Dorsolateral prefrontal cortex (tissue), 120 donors: ENCODE measurements at regions of chr12 and their contacts with region 1.

Region 1: DNA sequence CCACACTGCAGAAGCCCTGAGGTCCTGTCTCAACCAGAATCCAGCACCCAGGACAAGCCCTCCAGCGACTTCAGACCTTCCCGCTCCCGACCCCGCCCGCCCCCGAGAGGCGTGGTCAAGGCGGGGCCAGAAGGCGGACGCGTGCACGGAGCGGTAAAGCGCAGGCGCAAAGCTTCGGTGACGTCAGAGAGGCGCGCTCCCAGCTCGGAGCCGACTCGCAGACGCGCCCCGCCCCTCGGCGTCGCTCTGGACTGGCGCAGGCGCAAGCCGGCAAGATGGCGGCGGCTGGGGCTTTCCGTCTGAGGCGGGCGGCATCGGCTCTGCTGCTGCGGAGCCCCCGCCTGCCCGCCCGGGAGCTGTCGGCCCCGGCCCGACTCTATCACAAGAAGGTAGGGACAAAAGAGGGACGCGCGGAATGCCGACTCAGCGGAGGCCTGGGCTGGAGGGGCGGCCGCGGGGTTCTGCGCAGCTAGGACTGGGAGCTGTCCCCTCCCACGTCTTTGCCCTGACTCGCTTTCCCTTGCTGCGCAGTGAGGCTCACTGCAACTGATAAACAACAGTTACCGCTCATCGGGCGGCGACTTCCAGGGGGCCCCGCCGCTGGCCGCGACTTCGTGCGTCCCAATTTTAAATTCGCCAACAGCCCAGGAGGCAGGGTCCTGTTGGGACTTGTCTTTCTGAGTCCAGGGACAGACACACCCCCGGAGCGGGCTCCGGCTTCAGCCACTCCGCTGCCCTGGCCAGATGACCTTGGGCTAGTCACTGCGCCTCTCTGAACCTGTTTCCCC is at the start of gene ISCU:
- DNase-seq: peak; percentile 91 to 99 (median 96)
- H3K4me3 ChIP-seq: peak within 1 kb of the TSS; percentile 69 to 100 (median 97)
- H3K27ac ChIP-seq: peak within 1 kb of the TSS; percentile 63 to 99 (median 96)
- H3K27me3 ChIP-seq: no peaks in the 10 kb centered on the region
- CTCF ChIP-seq: peak in 30 of 56 donors; percentile 9 to 60 (median 30)
- total RNA-seq, gene ISCU: 120 to 322 (median 236) TPM

Region 2: GRCh38 chr12:108618079-108618952 is 55.8 kb after region 1 on chr12:
- intact Hi-C with region 1: loop called (anchors 1 to 2 kb)
- DNase-seq: peak; percentile 67 to 87 (median 78)
- H3K4me3 ChIP-seq: no peak overlapping the region
- H3K27ac ChIP-seq: peak overlapping the region in 7 of 59 donors; percentile 0 to 28 (median 13)
- H3K27me3 ChIP-seq: no peaks in the 10 kb centered on the region
- CTCF ChIP-seq: peak; percentile 93 to 100 (median 99)

Region 3: GRCh38 chr12:108731105-108731865 is 168.7 kb after region 1 on chr12 and contains the start of gene CORO1C:
- intact Hi-C with region 1: loop called in 1 of 2 experiments (anchors 2 kb)
- DNase-seq: peak; percentile 85 to 96 (median 90)
- H3K4me3 ChIP-seq: peak within 1 kb of the TSS; percentile 64 to 97 (median 88)
- H3K27ac ChIP-seq: peak within 1 kb of the TSS; percentile 71 to 99 (median 95)
- H3K27me3 ChIP-seq: no peaks in the 10 kb centered on the region
- CTCF ChIP-seq: peak; percentile 48 to 93 (median 82)
- total RNA-seq, gene CORO1C: 87.2 to 202 (median 122) TPM

Region 4: GRCh38 chr12:108856428-108857157 is 294.1 kb after region 1 on chr12:
- intact Hi-C with region 1: loop called in 1 of 2 experiments (anchors 2 kb)
- DNase-seq: peak in 9 of 10 donors; percentile 39 to 82 (median 69)
- H3K4me3 ChIP-seq: peak overlapping the region; percentile 60 to 95 (median 81)
- H3K27ac ChIP-seq: peak overlapping the region in 58 of 59 donors; percentile 47 to 95 (median 87)
- H3K27me3 ChIP-seq: no peaks in the 10 kb centered on the region
- CTCF ChIP-seq: no peak

Region 5: GRCh38 chr12:108950991-108951739 is 388.6 kb after region 1 on chr12:
- intact Hi-C with region 1: loop called (anchors 5 kb)
- DNase-seq: peak; percentile 51 to 81 (median 70)
- H3K4me3 ChIP-seq: peak overlapping the region in 41 of 59 donors; percentile 1 to 52 (median 31)
- H3K27ac ChIP-seq: peak overlapping the region in 13 of 59 donors; percentile 1 to 52 (median 15)
- H3K27me3 ChIP-seq: no peaks in the 10 kb centered on the region
- CTCF ChIP-seq: peak; percentile 81 to 96 (median 91)

Region 6: GRCh38 chr12:109027767-109028166 is 465.2 kb after region 1 on chr12:
- intact Hi-C with region 1: no loop called
- DNase-seq: no peak
- H3K4me3 ChIP-seq: no peak overlapping the region
- H3K27ac ChIP-seq: peak overlapping the region in 40 of 59 donors; percentile 8 to 83 (median 58)
- H3K27me3 ChIP-seq: no peaks in the 10 kb centered on the region
- CTCF ChIP-seq: no peak